ENCODE measurements at regions of chr19 and their contacts with region 1.

Region 1: GRCh38 chr19:35471946-35472345 is 18.3 kb downstream of the KRTDAP start:
- DNase-seq: no peak
- ATAC-seq: no peak
- H3K4me3 ChIP-seq: no peak overlapping the region
- H3K27ac ChIP-seq: no peak overlapping the region
- H3K4me1 ChIP-seq: no peaks in the 10 kb centered on the region
- H3K27me3 ChIP-seq: no peaks in the 10 kb centered on the region
- CTCF ChIP-seq: no peak
- POLR2A ChIP-seq: no peak

Region 2: DNA sequence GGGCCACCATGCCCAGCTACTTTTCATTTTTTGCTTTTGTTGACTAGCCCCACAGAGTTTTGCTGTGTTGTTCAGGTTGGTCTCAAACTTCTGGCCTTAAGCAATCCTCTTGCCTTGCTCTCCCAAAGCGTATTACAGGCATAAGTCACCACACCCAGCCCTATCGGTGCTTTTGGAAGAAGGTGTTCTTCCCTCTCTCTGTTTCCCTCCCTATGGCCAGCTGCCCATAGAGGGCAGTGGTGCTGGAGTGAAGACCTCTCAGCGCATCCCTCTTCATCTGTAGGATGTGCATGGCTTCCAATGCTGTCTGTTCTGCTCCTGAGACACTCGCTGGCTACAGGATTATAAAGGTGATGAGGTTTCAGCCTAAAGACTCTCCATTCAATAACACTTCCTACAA is 144.3 kb before region 1 on chr19:
- intact Hi-C with region 1: no loop called
- DNase-seq: no peak
- ATAC-seq: no peak
- H3K4me3 ChIP-seq: no peak overlapping the region
- H3K27ac ChIP-seq: no peak overlapping the region
- H3K4me1 ChIP-seq: no peaks in the 10 kb centered on the region
- H3K27me3 ChIP-seq: no peaks in the 10 kb centered on the region
- CTCF ChIP-seq: no peak
- POLR2A ChIP-seq: no peak

Region 3: DNA sequence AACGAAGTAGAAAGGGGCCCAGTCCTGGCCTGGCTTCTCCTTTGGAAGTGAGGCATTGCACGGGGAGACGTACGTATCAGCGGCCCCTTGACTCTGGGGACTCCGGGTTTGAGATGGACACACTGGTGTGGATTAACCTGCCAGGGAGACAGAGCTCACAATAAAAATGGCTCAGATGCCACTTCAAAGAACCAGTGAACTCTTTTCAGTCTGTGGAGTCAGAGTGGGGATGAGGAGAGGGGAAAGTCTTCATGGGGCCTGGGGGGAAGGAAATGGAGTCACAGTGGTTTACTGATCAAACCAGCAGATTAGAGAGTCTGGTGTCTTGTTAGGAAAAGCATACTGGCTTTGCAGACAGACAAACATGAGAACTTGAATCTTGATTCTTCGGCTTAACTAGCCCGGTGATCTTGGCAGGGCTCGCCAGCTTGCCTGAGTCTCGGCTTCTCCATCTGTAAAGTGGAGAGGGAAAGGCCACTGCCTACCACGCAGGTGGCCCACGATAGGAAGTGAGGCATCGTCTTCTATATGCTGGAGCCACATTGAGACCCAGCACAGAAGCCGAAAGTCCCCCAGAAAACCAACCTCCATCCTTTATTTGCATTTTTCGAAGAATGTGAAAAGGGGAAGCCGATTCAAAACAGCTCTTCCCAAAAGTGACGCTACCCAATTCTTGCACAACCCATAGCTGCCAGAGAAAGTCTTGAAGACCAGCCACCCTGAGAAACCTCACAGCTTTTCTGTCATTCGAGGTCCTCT is 124.6 kb before region 1 on chr19 and contains the start of gene FFAR1:
- intact Hi-C with region 1: loop called (anchors 5 kb)
- DNase-seq: peak in 2 of 4 donors; percentile 7 to 68
- ATAC-seq: no peak
- H3K4me3 ChIP-seq: no peak within 1 kb of the TSS
- H3K27ac ChIP-seq: peak within 1 kb of the TSS in 1 of 4 donors; percentile 14
- H3K4me1 ChIP-seq: no peaks in the 10 kb centered on the region
- H3K27me3 ChIP-seq: peaks cover 0 to 6% of the 10 kb centered on the region in 2 donors
- CTCF ChIP-seq: no peak
- POLR2A ChIP-seq: no peak
- total RNA-seq, gene FFAR1: 1.6 to 2.3 TPM

Region 4: DNA sequence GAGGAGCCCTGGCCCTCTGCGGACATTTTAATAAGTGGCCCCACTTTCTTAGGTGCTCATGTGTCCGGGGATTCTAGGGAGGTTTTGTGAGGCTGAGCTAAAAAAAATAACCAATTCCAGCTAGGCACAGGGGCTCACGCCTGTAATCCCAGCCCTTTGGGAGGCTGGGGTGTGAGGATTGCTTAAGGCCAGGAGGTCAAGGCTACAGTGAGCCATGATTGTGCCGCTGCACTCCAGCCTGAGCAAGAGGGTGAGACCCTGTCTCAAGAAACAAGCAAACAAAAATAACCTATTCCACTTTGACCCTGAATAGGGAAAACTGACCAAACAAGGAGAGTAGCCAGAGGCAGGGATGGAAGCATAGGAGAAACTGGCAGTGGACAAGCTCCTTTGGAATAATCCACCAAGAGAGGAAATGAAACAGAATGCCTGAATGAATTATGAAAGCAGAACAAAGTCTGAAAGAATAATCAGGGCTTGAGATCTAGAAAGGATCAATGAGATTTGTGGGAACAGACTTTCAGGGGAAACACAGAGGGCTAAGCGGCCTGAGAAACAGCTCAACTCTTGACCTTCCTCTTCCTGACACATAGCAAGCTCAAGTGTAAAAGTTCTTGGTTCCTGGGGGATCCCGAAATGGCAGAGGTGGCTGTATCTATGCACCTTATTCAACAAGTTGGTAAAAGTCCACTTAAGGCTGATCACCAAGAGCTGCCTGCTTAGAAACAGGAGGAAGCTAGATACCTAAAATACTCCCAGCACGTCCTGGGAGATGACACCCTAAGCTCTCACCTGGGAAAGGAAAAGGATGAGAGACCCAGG is 54.0 kb before region 1 on chr19:
- intact Hi-C with region 1: loop called (anchors 5 kb)
- DNase-seq: no peak
- ATAC-seq: no peak
- H3K4me3 ChIP-seq: no peak overlapping the region
- H3K27ac ChIP-seq: no peak overlapping the region
- H3K4me1 ChIP-seq: peaks cover 28% of the 10 kb centered on the region
- H3K27me3 ChIP-seq: no peaks in the 10 kb centered on the region
- CTCF ChIP-seq: no peak
- POLR2A ChIP-seq: no peak

Region 5: GRCh38 chr19:35509861-35510625 is 38.1 kb after region 1 on chr19:
- intact Hi-C with region 1: no loop called
- DNase-seq: peak; percentile 90 to 94 (median 92)
- ATAC-seq: peak; percentile 89
- H3K4me3 ChIP-seq: peak overlapping the region; percentile 18 to 46
- H3K27ac ChIP-seq: peak overlapping the region; percentile 74 to 92 (median 90)
- H3K4me1 ChIP-seq: peaks cover 19% of the 10 kb centered on the region
- H3K27me3 ChIP-seq: no peaks in the 10 kb centered on the region
- CTCF ChIP-seq: peak; percentile 96 to 98 (median 97)
- POLR2A ChIP-seq: peak; percentile 63 to 92 (median 91)